ENCODE measurements at regions of chr16 and their contacts with region 1.

Region 1: GRCh38 chr16:48609652-48610029 is 339 bp downstream of the N4BP1 start:
- DNase-seq: no peak
- ATAC-seq: peak; percentile 37
- H3K4me3 ChIP-seq: peak overlapping the region; percentile 80
- H3K27ac ChIP-seq: peak overlapping the region; percentile 75
- H3K4me1 ChIP-seq: peaks cover 28% of the 10 kb centered on the region
- H3K27me3 ChIP-seq: no peaks in the 10 kb centered on the region
- CTCF ChIP-seq: no peak

Region 2: GRCh38 chr16:48556913-48557351 is 52.7 kb before region 1 on chr16:
- CTCF ChIA-PET with region 1: no interaction called
- POLR2A ChIA-PET with region 1: no interaction called
- intact Hi-C with region 1: loop called (anchors 5 kb)
- DNase-seq: peak; percentile 67
- ATAC-seq: peak; percentile 89
- H3K4me3 ChIP-seq: no peak overlapping the region
- H3K27ac ChIP-seq: 0 out of 2 replicates have a peak overlapping the region, but pooled peaks have one; percentile 7
- H3K4me1 ChIP-seq: peaks cover 18% of the 10 kb centered on the region
- H3K27me3 ChIP-seq: no peaks in the 10 kb centered on the region
- CTCF ChIP-seq: no peak

Region 3: GRCh38 chr16:48647794-48648193 is 38.2 kb after region 1 on chr16:
- CTCF ChIA-PET with region 1: no interaction called
- POLR2A ChIA-PET with region 1: no interaction called
- intact Hi-C with region 1: no loop called
- DNase-seq: no peak
- ATAC-seq: no peak
- H3K4me3 ChIP-seq: no peak overlapping the region
- H3K27ac ChIP-seq: no peak overlapping the region
- H3K4me1 ChIP-seq: no peaks in the 10 kb centered on the region
- H3K27me3 ChIP-seq: no peaks in the 10 kb centered on the region
- CTCF ChIP-seq: no peak

Measured in PC-3 (cell line).